Esophagus muscularis mucosa (tissue), 4 donors: ENCODE measurements at regions of chr4 and their contacts with region 1.

Region 1: DNA sequence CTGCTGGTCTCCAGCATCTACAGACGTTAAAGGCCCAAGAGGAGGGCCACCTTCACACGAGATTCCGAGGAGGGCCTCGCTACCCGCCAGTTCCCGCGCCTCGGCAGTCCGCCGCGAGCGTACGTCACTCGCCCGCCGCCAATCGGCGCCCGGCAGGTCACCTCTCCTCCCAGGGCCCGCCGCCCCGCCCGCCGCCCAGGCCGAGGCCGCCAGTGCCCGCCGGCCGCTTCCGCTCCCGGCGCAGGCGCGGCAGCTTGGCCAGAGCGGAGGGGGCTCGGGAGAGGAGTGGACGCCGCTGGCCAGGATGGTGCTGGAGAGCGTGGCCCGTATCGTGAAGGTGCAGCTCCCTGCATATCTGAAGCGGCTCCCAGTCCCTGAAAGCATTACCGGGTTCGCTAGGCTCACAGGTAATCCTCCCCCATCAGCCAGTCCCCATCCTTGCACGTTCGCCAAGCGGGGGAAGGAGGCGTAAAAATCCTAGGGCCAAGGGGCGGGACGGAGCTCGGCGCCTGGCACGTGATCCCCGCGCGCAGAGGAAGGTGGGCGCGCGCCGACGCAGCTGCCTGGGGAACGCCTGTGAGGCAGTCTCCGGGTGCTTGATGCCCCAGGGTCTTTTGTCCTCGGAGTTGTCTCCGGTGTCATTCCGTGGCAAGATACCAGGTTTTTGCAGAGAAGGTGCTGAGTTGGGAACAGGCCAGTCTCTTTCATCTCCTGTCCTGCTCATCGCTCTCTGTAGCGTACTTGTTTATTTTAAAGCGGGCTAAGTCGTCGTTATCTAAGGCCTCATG is at the start of gene CISD2:
- DNase-seq: peak; percentile 97
- H3K4me3 ChIP-seq: peak within 1 kb of the TSS; percentile 68 to 79 (median 73)
- H3K27ac ChIP-seq: peak within 1 kb of the TSS; percentile 95 to 97 (median 96)
- H3K4me1 ChIP-seq: peaks cover 21 to 26% (median 23%) of the 10 kb centered on the region in 4 donors
- H3K27me3 ChIP-seq: no peaks in the 10 kb centered on the region
- CTCF ChIP-seq: no peak
- EP300 ChIP-seq: no peak
- POLR2A ChIP-seq: peak; percentile 64
- total RNA-seq, gene CISD2: 6.6 to 13.3 (median 10.3) TPM

Region 2: GRCh38 chr4:102620697-102621497 is 248.1 kb before region 1 on chr4:
- intact Hi-C with region 1: loop called (anchors 10 kb)
- DNase-seq: no peak
- H3K4me3 ChIP-seq: no peak overlapping the region
- H3K27ac ChIP-seq: peak overlapping the region in 1 of 4 donors; percentile 36
- H3K4me1 ChIP-seq: peaks cover 0 to 13% (median 9%) of the 10 kb centered on the region in 4 donors
- H3K27me3 ChIP-seq: no peaks in the 10 kb centered on the region
- CTCF ChIP-seq: peak; percentile 59 to 67 (median 60)
- EP300 ChIP-seq: no peak
- POLR2A ChIP-seq: no peak

Region 3: DNA sequence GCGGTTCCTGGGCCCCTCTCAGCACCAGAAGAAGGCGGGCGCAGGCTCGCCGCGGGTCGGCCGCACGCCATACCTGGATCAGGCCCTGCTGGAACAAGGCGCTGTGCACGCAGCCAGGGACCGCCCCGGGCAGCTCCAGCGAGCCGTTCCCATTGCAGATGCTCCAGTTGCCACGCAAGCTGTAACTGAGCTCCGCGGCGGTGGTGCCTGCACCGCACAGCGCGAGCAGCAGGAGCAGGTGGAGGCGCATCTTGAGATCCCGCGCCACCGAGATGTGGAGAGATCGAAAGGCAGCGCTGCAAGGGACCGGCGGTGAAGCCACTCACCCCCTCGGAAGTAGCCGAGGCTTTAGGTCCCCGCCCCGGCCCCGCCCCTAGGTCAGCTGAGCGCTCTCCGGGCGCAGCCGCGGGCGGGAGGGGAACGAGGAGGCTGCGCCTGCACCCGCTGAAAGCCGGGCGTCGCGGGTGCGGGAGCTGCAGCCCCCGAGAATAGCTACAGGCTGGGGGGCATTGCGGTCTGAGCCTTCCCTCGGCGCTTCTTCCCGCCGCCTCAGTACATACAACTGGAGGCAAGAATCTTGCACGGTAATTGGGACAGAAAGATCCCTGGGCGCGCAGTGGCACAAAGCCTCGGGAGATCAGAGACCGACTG is 108.2 kb before region 1 on chr4 and contains the start of gene MANBA:
- intact Hi-C with region 1: loop called (anchors 2 kb)
- DNase-seq: no peak
- H3K4me3 ChIP-seq: peak within 1 kb of the TSS; percentile 77 to 91 (median 86)
- H3K27ac ChIP-seq: peak within 1 kb of the TSS; percentile 78 to 90 (median 83)
- H3K4me1 ChIP-seq: peaks cover 9 to 26% (median 23%) of the 10 kb centered on the region in 4 donors
- H3K27me3 ChIP-seq: no peaks in the 10 kb centered on the region
- CTCF ChIP-seq: peak in 1 of 3 experiments; percentile 5
- EP300 ChIP-seq: no peak
- POLR2A ChIP-seq: no peak
- total RNA-seq, gene MANBA: 22.1 to 24.9 (median 24.5) TPM

Region 4: GRCh38 chr4:103019308-103020124 is 150.5 kb after region 1 on chr4 and contains the start of gene SLC9B1:
- intact Hi-C with region 1: loop called (anchors 2 kb)
- DNase-seq: peak; percentile 97
- H3K4me3 ChIP-seq: peak within 1 kb of the TSS; percentile 53 to 63 (median 56)
- H3K27ac ChIP-seq: peak within 1 kb of the TSS; percentile 89 to 90 (median 90)
- H3K4me1 ChIP-seq: peaks cover 7 to 18% (median 14%) of the 10 kb centered on the region in 4 donors
- H3K27me3 ChIP-seq: no peaks in the 10 kb centered on the region
- CTCF ChIP-seq: no peak
- EP300 ChIP-seq: peak; percentile 69
- POLR2A ChIP-seq: no peak
- total RNA-seq, gene SLC9B1: 0.29 to 1.3 (median 0.99) TPM in 3 of 4 donors, not detected in the other